ENCODE measurements at regions of chr10 and their contacts with region 1.

Region 1: DNA sequence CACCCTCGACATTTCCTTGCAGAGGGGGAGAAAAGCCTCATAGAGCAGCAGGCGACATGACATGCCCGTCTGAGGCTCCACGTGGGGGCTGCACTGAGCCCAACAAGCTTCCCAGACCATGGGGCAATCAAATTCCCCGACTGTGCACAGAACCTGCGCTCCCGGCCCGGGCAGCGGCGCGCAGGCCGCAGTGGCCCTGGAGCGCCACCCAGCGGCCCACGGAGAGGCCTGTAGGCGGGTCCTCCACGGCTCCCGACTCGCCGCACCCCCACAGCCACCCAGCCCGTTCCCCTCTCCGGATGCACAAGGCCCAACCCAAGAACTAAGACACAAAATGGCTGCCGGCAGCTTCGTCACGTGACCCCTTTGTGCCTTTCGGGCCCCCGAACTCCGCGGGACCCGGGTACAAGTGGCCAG is 816 bp downstream of the EPC1 start:
- H3K4me3 ChIP-seq: peak overlapping the region; percentile 98
- H3K27ac ChIP-seq: peak overlapping the region; percentile 100
- H3K4me1 ChIP-seq: peaks cover 13% of the 10 kb centered on the region
- CTCF ChIP-seq: peak; percentile 99

Region 2: DNA sequence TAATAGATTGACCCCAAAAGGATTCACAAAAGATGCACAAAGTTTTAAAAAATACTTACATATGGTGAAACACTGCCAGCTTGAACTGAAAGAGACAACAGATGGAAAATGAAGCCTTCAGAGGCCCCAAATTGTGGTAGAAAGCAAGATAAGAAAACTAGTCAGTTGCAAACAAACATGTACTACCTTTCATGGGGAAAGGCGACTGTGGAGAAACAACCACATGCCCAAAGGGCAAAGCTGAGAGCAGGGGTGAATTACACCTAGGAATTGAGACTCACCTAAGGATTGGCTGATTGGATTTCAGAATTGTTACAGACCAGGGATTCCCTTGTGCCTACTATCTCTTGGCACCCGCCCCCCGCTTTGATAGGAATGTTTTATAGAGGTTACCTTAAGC is 12.3 kb before region 1 on chr10:
- CTCF ChIA-PET with region 1: interaction called, 10 read pairs
- POLR2A ChIA-PET with region 1: interaction called, 6 read pairs
- H3K4me3 ChIP-seq: no peak overlapping the region
- H3K27ac ChIP-seq: no peak overlapping the region
- H3K4me1 ChIP-seq: peaks cover 24% of the 10 kb centered on the region
- CTCF ChIP-seq: no peak

Measured in HEK293 (cell line).